HepG2 (cell line): ENCODE measurements at regions of chr1 and their contacts with region 1.

Region 1: GRCh38 chr1:14878124-14878523 is 275.4 kb upstream of the TMEM51 start:
- DNase-seq: peak; percentile 64
- ATAC-seq: peak; percentile 84
- H3K4me3 ChIP-seq: no peak overlapping the region
- H3K27ac ChIP-seq: no peak overlapping the region
- H3K4me1 ChIP-seq: peaks cover 14% of the 10 kb centered on the region
- H3K27me3 ChIP-seq: peaks cover 0 to 54% of the 10 kb centered on the region in 2 experiments; a peak in 3 of 5 replicates
- CTCF ChIP-seq: no peak
- EP300 ChIP-seq: no peak
- POLR2A ChIP-seq: no peak
- RAD21 ChIP-seq: no peak

Region 2: GRCh38 chr1:14842891-14843290 is 35.2 kb before region 1 on chr1:
- CTCF ChIA-PET with region 1: no interaction called
- POLR2A ChIA-PET with region 1: no interaction called
- in situ Hi-C with region 1: no loop called
- intact Hi-C with region 1: loop called (anchors 1 kb)
- DNase-seq: no peak
- ATAC-seq: no peak
- H3K4me3 ChIP-seq: no peak overlapping the region
- H3K27ac ChIP-seq: no peak overlapping the region
- H3K4me1 ChIP-seq: no peaks in the 10 kb centered on the region
- H3K27me3 ChIP-seq: peaks cover 0 to 10% of the 10 kb centered on the region in 2 experiments; a peak in 2 of 5 replicates
- CTCF ChIP-seq: no peak
- EP300 ChIP-seq: no peak
- POLR2A ChIP-seq: no peak
- RAD21 ChIP-seq: no peak